G401 (cell line): ENCODE measurements at regions of chr1 and their contacts with region 1.

Region 1: GRCh38 chr1:53576381-53576801 is 117.2 kb downstream of the DMRTB1 start:
- DNase-seq: no peak

Region 2: DNA sequence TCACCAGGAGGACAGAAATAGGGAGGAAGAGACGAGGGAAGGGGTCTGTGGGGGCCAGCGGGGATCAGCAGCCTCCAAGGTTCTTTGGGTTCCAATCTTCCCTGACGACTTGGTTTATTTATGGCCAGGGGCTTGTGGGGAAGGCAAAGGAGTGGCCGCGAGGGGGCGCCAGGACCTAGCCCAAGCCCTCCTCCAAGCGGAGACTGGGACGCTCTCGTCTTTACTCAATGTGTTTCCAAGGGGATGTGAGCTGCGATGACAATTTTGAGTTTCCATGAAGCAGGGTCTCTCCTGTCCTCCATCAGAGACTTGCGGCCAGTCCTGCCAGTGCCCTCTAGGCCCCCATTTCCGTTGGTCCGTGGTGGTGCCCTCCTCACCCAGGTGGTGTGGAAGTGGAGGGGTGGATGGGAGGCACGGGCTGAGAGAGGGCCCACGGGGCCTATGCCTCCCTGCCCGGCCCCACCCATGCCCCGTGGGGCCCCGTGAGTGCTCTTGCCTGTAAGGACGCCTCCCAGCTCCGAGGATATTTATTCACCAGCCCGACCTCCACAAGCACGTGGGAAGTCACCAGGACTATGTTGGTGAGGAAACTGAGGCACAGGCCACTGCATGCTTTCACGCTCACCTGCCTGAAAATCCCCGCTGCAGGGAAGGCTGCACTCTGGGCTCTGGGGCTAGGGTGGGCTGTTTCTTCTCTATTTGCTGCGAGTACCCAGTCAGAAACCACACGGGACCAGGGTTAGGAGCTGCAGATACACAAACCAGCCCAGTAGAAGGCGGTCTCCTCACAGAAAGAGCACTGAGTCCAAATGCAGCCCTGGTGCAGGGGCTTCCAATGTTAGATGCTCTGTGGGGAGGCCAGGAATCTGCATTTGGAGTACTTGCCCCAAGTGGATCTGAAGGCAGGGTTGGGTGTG is 90.7 kb before region 1 on chr1:
- in situ Hi-C with region 1: loop called (anchors 5 kb)
- DNase-seq: peak; percentile 79